Calu3 (cell line): ENCODE measurements at regions of chr19 and their contacts with region 1.

Region 1: GRCh38 chr19:57435062-57435978 is at the start of gene ZNF749:
- DNase-seq: peak; percentile 99
- H3K4me3 Mint-ChIP-seq: peak within 1 kb of the TSS; percentile 94
- H3K27ac Mint-ChIP-seq: peak within 1 kb of the TSS; percentile 69
- H3K4me1 Mint-ChIP-seq: peaks cover 21% of the 10 kb centered on the region
- H3K27me3 Mint-ChIP-seq: no peaks in the 10 kb centered on the region
- CTCF ChIP-seq: no peak
- total RNA-seq, gene ZNF749: 20.4 and 20.8 TPM in 2 replicates

Region 2: DNA sequence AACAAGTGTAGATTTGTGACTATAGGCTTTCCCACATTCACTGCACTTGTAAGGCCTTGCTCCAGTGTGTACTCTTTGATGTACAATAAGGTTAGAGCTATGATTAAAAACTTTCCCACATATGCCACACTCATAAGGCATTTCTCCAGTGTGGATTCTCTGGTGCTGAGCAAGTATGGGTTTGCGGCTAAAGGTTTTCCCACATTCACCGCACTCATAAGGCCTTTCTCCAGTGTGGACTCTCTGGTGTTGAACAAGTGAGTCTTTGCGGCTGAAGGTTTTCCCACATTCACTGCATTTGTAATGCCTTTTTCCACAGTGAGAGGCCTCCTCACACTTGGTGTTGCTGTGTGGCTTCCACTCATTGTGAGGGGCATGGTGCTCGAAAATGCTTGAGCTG is 38.3 kb after region 1 on chr19:
- CTCF ChIA-PET with region 1: no interaction called
- intact Hi-C with region 1: no loop called
- DNase-seq: no peak
- H3K4me3 Mint-ChIP-seq: no peak overlapping the region
- H3K27ac Mint-ChIP-seq: no peak overlapping the region
- H3K4me1 Mint-ChIP-seq: peaks cover 7% of the 10 kb centered on the region
- H3K27me3 Mint-ChIP-seq: no peaks in the 10 kb centered on the region
- CTCF ChIP-seq: no peak

Region 3: DNA sequence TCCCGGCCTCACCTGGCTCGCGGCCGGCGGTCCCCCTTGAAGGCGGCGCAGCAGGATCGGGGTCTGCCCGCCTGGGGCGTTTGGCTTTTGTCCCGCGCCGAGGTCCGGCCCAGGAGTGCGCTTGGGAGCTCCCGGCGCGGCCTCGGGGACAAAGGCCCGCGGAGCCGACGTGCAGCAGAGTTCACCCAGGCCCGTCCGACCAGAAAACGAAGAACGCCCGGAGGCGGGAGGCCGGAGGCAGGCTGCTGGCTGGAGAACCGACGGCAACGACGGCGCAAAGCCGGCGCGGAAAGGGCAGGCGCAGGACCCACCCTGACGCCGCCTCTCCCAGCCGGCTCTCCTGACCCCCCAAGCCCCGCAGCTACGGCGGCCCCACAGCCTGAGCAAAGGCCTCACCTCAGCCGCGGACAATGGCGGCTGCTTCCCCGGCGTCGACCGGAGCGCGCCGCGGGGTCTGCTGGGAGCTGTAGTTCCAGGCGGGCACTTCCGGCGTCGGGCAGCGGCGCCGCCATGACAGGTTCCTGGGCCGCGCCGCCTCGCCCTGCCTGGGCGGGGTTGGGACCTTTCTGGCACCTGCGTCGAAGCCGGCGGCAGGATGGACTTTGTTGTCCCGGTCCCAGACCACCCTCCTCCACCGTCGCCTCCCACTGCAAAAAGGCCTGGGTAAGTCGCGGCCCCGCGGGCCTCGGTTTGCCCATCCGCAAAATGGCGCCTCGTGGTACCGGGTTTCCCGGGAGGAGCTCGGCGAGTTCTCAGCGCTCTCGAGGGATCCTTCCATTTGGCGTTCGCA is 567.3 kb after region 1 on chr19 and contains the start of gene ZNF606:
- CTCF ChIA-PET with region 1: no interaction called
- intact Hi-C with region 1: loop called (anchors 10 kb)
- DNase-seq: peak; percentile 92
- H3K4me3 Mint-ChIP-seq: peak within 1 kb of the TSS; percentile 87
- H3K27ac Mint-ChIP-seq: peak within 1 kb of the TSS; percentile 66
- H3K4me1 Mint-ChIP-seq: peaks cover 10% of the 10 kb centered on the region
- H3K27me3 Mint-ChIP-seq: no peaks in the 10 kb centered on the region
- CTCF ChIP-seq: no peak
- total RNA-seq, gene ZNF606: 23.5 and 24.8 TPM in 2 replicates